Psoas muscle (tissue), 8 donors: ENCODE measurements at regions of chr2 and their contacts with region 1.

Region 1: GRCh38 chr2:75403991-75404428 is 156.7 kb downstream of the EVA1A start:
- DNase-seq: no peak
- ATAC-seq: peak; percentile 49 to 81 (median 64)
- H3K4me3 ChIP-seq: no peak overlapping the region
- H3K27ac ChIP-seq: no peak overlapping the region
- H3K4me1 ChIP-seq: no peaks in the 10 kb centered on the region
- H3K27me3 ChIP-seq: no peaks in the 10 kb centered on the region
- CTCF ChIP-seq: peak; percentile 83

Region 2: DNA sequence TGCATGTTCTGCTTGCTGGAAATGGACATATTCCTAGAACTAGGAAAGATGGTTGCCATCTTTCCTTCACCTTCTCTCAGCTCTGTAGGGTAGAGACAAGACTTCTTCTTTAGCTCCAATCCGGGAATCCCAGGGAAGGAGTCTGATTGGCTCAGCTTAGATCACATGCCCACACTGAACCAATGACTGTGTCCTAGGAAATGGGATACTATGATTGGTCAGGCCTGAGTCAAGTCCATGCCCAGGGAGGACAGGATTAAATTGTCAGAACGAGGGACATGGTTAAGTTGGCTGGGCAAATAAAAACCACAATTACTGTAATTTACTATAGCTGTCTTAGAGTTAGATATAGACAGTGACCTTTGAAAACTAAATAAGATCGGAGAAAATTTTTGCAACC is 718.6 kb before region 1 on chr2:
- intact Hi-C with region 1: loop called in 1 of 2 experiments (anchors 5 kb)
- DNase-seq: no peak
- ATAC-seq: no peak
- H3K4me3 ChIP-seq: no peak overlapping the region
- H3K27ac ChIP-seq: no peak overlapping the region
- H3K4me1 ChIP-seq: no peaks in the 10 kb centered on the region
- H3K27me3 ChIP-seq: no peaks in the 10 kb centered on the region
- CTCF ChIP-seq: no peak

Region 3: DNA sequence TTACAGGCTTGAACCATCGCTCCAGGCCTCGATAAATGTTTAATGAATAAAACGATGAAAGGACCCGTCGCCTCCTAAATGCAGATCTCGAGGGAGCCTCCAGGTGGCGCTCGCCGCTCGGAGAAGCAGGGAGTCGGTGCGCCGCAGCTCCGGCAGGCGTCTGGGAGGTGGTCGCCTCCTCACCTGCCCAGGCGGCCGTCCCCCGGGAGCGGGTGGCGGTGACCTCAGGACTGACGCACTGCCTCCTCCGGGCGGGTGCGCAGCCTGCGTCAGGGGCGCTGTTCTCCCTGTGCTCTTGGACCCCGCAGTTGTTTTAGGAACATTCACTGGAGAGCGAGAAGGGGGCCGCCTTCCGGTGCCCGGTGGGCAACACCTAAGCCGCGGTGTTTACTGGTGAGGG is 484.2 kb before region 1 on chr2:
- intact Hi-C with region 1: loop called (anchors 2 to 5 kb)
- DNase-seq: peak; percentile 64 to 81
- ATAC-seq: peak; percentile 69 to 84 (median 76)
- H3K4me3 ChIP-seq: peak overlapping the region; percentile 57
- H3K27ac ChIP-seq: no peak overlapping the region
- H3K4me1 ChIP-seq: no peaks in the 10 kb centered on the region
- H3K27me3 ChIP-seq: peaks cover 0 to 12% (median 3%) of the 10 kb centered on the region in 3 donors
- CTCF ChIP-seq: peak; percentile 85

Region 4: DNA sequence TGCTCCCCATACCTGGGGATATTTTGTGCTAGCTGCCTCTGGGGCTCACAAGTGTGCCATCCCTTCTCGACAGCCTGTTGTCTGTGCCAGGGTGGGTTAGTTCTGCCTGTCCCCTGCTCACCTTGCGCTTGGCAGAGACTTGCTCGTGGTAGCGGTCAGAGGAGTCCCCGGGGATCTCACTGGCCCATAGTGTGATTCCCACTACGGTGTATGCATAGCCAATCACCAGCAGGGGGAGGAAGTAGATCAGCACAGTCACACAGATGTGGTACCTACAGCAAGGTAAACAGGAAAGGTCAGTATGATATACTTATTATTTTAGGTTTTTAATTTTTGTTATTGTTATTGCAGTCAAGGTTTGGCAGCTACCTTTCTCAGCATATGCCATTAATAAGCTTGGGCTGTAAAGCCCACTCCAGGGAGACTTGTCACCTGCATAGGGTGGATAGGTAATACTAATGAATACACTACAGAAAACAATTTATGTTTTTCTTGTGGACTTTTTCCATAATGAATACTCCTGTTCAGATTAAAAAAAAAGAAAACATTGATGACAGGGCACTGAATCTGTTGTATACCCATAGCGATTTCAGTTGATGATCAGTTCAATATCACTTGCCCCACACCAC is 350.4 kb before region 1 on chr2:
- intact Hi-C with region 1: loop called in 1 of 2 experiments (anchors 5 kb)
- DNase-seq: no peak
- ATAC-seq: peak in 2 of 4 donors; percentile 56 to 67
- H3K4me3 ChIP-seq: no peak overlapping the region
- H3K27ac ChIP-seq: no peak overlapping the region
- H3K4me1 ChIP-seq: no peaks in the 10 kb centered on the region
- H3K27me3 ChIP-seq: no peaks in the 10 kb centered on the region
- CTCF ChIP-seq: peak; percentile 50

Region 5: GRCh38 chr2:75064691-75065396 is 339.2 kb before region 1 on chr2:
- intact Hi-C with region 1: loop called in 1 of 2 experiments (anchors 10 kb)
- DNase-seq: peak; percentile 32 to 67
- ATAC-seq: peak; percentile 46 to 73 (median 64)
- H3K4me3 ChIP-seq: no peak overlapping the region
- H3K27ac ChIP-seq: no peak overlapping the region
- H3K4me1 ChIP-seq: no peaks in the 10 kb centered on the region
- H3K27me3 ChIP-seq: peaks cover 0 to 2% (median 0%) of the 10 kb centered on the region in 3 donors
- CTCF ChIP-seq: peak; percentile 75